Activated CD4-positive, alpha-beta T cell treated with anti-CD3 and anti-CD28 coated beads for 36 hours (primary cell): ENCODE measurements at regions of chr9 and their contacts with region 1.

Region 1: DNA sequence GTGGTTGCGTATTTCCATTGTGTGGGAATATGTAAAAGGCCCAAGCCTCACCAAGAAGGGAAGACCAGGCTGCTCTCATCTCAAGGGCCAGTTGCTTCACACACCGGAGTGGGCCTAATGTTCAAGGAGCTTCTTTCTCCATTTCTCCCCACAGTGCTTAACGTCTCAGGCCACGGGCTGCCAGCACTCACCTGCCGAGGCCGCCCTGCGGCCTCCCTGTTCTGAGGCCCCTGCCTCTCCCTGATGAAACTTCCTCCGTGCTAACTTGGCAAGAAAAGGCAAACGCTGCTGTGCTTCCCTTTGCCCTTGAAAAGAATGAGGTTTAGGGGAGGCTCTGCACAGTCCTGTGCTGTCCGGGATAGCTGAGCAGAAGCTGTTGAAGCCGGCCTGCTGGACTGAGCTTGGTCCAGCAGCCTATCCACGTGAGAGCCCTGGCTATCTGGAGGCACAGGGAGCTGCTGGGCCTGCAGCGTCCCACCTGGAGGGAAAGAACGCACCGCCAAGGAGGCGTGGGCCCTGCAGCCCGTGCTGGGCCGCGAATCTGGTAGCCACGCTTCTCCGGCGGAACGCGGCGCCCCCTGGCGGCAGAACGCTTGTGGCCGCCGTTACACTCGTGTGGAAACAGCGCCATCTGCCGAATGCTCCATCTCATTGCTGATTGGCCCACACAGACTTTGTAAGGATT is 73.5 kb upstream of the PRSS3 start:
- DNase-seq: peak; percentile 94
- ATAC-seq: peak; percentile 68
- H3K4me3 Mint-ChIP-seq: no peak overlapping the region
- H3K27ac Mint-ChIP-seq: no peak overlapping the region
- H3K4me1 Mint-ChIP-seq: peaks cover 4% of the 10 kb centered on the region
- H3K27me3 Mint-ChIP-seq: peaks cover 5% of the 10 kb centered on the region

Region 2: DNA sequence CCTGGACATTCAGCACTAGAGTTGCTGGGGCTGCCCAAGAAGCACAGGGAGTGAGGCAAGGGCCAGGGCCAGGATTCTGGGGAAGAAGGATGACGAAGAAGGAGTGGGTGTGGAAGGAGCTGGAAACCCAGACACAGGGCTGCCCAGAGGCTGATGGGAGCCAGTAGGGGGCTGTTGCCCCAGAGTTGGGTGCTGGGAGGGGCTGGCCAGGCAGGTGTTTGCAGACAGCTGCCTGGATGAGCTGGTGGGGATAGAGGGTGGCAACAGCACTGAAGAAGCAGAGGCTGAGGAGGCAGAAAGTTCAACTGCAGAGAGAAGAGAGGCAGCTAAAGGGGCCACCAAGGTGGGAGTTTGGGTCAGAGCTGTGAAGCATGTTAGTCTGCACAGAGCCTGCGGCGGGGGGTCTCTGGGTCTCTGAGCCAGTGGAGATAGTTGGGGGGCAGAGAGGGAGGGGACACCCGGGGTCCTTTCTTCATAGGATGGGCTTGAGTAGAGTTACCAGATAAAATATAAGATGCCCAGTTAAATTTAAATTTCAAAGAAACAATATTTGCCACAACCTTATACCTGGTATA is 316.9 kb before region 1 on chr9:
- CTCF ChIA-PET with region 1: no interaction called
- POLR2A ChIA-PET with region 1: no interaction called
- intact Hi-C with region 1: loop called in 1 of 2 experiments (anchors 5 kb)
- DNase-seq: no peak
- ATAC-seq: no peak
- H3K4me3 Mint-ChIP-seq: no peak overlapping the region
- H3K27ac Mint-ChIP-seq: no peak overlapping the region
- H3K4me1 Mint-ChIP-seq: peaks cover 3% of the 10 kb centered on the region
- H3K27me3 Mint-ChIP-seq: no peaks in the 10 kb centered on the region

Region 3: DNA sequence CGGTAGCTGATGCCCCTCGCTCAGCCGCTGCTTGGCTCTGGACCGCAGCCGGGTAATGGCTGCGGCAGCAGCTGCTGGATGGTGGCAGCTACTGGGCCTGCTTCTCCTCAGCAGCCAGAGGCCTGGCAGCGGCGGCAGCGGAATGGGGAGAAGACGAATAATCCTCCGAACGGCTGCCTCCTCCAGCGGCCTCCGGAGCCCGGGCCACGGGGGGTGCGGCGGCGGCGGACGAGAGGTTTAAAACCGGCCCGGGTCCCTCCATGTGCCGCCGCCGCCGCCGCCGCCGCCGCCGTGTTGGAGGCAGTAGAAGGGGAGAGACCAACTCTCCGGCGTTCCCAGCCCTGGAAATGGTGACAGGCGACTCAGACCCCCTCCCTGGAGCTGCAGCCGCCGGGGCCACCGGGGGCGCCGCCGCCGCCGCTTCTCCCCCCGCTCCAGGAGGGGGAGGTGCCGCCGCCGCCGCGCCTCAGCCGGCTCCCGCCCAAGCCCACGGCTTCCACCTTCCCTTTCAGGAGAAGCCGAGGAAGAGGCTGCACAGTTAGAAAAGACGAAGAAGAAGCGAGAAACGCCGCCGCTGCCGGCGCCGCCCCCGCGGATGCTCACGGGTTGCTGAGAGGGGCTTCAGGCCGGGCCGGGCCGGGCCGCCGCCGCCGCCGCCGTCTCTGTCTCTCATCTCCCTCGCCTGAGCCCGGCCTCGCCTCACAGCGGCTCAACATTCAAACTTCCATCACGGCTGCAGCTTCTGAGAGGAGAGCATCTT is 44.9 kb before region 1 on chr9:
- CTCF ChIA-PET with region 1: interaction called, 4 read pairs
- POLR2A ChIA-PET with region 1: no interaction called
- intact Hi-C with region 1: loop called in 1 of 2 experiments (anchors 5 kb)
- DNase-seq: peak; percentile 48
- ATAC-seq: peak; percentile 72
- H3K4me3 Mint-ChIP-seq: peak overlapping the region; percentile 74
- H3K27ac Mint-ChIP-seq: peak overlapping the region; percentile 65
- H3K4me1 Mint-ChIP-seq: peaks cover 6% of the 10 kb centered on the region
- H3K27me3 Mint-ChIP-seq: peaks cover 57% of the 10 kb centered on the region

Region 4: DNA sequence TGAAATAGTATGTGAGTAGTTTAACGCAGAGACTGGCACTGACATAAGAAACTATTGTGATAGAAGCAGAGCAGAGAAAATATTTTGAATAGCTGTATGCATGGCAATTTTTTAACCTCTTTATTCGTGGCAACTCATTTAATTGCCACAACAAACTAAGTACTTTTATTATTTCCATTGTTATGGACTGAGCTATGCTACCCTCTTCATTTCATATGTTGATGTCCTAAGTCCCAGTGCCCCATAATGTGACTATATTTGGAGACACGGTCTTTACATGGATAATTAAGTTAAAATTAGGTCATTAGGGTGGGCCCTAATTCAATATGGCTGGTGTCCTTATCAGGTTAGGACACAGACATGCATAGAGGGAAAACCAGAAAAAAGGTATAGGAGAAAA is 12.5 kb before region 1 on chr9:
- CTCF ChIA-PET with region 1: interaction called, 25 read pairs
- POLR2A ChIA-PET with region 1: no interaction called
- intact Hi-C with region 1: no loop called
- DNase-seq: no peak
- ATAC-seq: no peak
- H3K4me3 Mint-ChIP-seq: no peak overlapping the region
- H3K27ac Mint-ChIP-seq: no peak overlapping the region
- H3K4me1 Mint-ChIP-seq: no peaks in the 10 kb centered on the region
- H3K27me3 Mint-ChIP-seq: peaks cover 15% of the 10 kb centered on the region